Heart right ventricle (tissue), 16 donors: ENCODE measurements at regions of chr10 and their contacts with region 1.

Region 1: DNA sequence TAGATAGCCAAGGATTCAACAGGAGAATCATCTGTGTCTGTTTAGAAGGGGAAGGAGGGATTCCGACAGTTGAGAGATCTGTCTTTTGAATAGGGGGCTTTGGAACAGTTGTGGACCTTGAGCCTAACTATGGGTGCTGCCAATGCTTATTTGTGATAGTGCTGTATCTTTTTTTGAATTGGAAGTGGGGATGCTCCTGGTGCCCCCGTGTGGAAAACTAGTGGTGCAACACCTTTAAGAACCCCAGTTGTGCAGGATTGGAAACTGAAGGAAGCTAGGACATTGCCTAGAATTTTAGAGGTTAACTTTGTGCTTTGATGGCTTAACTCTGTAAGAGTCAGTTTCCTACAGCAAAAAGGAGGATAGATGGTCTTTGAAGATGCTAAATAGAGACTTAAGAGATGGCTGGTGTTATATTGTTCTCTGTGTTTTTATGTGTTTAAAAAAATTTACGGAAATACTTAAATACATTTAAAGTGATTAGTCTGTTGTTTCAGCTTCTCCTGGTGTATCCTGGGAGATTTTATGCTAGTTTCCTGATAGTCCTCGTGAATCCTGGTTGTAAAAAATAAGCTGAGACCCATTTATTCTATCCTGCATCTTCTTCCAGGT is 69.3 kb downstream of the AP3M1 start:
- DNase-seq: peak in 1 of 2 donors; percentile 54
- ATAC-seq: peak; percentile 47 to 77 (median 70)
- H3K4me3 ChIP-seq: no peak overlapping the region
- H3K27ac ChIP-seq: peak overlapping the region in 1 of 10 donors; percentile 54
- H3K4me1 ChIP-seq: peaks cover 0 to 67% (median 38%) of the 10 kb centered on the region in 9 donors
- H3K27me3 ChIP-seq: no peaks in the 10 kb centered on the region
- CTCF ChIP-seq: peak; percentile 52 to 87 (median 76)

Region 2: GRCh38 chr10:73879296-73880173 is 201.8 kb before region 1 on chr10:
- intact Hi-C with region 1: loop called in 3 of 10 experiments (anchors 10 kb)
- DNase-seq: peak; percentile 85 to 90
- ATAC-seq: peak; percentile 89 to 96 (median 94)
- H3K4me3 ChIP-seq: no peak overlapping the region
- H3K27ac ChIP-seq: no peak overlapping the region
- H3K4me1 ChIP-seq: peaks cover 0 to 36% (median 20%) of the 10 kb centered on the region in 9 donors
- H3K27me3 ChIP-seq: no peaks in the 10 kb centered on the region
- CTCF ChIP-seq: peak; percentile 83 to 96 (median 93)

Region 3: GRCh38 chr10:73886085-73886529 is 195.2 kb before region 1 on chr10:
- intact Hi-C with region 1: loop called (anchors 1 to 10 kb)
- DNase-seq: peak; percentile 48 to 88
- ATAC-seq: peak; percentile 77 to 90 (median 86)
- H3K4me3 ChIP-seq: no peak overlapping the region
- H3K27ac ChIP-seq: peak overlapping the region in 9 of 10 donors; percentile 72 to 92 (median 87)
- H3K4me1 ChIP-seq: peaks cover 26 to 34% (median 31%) of the 10 kb centered on the region in 9 donors
- H3K27me3 ChIP-seq: no peaks in the 10 kb centered on the region
- CTCF ChIP-seq: peak; percentile 57 to 93 (median 86)

Region 4: GRCh38 chr10:73956476-73957359 is 124.6 kb before region 1 on chr10:
- intact Hi-C with region 1: loop called in 3 of 10 experiments (anchors 5 to 10 kb)
- DNase-seq: no peak
- ATAC-seq: peak; percentile 53 to 78 (median 70)
- H3K4me3 ChIP-seq: no peak overlapping the region
- H3K27ac ChIP-seq: peak overlapping the region in 9 of 10 donors; percentile 21 to 74 (median 61)
- H3K4me1 ChIP-seq: peaks cover 5 to 60% (median 11%) of the 10 kb centered on the region in 9 donors
- H3K27me3 ChIP-seq: no peaks in the 10 kb centered on the region
- CTCF ChIP-seq: no peak

Region 5: DNA sequence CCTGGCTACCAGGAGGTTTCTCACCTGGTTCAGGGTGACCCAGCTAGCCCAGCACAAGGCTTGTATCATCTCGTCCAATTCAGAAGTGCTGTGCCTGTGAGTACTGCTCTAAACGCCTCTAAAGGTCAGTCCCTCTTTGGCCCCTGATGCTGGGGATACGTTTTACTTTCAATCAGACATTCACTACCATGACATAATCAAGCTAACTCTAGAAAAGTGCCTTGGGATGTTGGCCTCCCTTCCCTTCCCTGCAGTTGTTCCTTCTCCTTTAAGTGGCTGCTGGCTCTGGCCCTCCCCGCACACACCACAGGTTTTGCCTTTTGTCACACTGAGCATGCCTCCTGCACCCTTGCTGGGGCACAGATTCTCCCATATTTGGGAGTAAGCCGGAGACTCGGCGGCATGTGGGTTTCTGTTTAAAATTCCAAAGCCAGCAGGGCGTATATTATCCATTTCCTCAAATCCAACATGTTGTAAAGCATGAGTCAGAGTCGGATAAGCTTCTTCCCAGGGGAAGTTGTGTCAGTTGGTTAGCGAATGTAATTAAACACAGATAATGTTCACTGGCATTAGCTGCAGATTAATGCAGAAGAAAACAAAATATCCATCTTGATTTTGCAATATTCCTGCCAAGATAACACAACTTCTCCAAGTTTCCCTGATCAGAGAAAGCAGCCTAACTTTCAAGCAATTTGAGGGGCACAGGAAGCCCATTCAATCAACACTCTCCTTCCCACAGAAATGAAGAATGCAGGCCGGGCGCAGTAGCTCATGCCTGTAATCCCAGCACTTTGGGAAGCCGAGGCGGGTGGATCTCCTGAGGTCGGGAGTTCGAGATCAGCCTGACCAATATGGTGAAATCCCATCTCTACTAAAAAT is 115.2 kb before region 1 on chr10:
- intact Hi-C with region 1: loop called in 2 of 10 experiments (anchors 5 to 10 kb)
- DNase-seq: peak; percentile 73 to 86
- ATAC-seq: peak; percentile 92 to 96 (median 94)
- H3K4me3 ChIP-seq: peak overlapping the region in 7 of 10 donors; percentile 2 to 30 (median 12)
- H3K27ac ChIP-seq: peak overlapping the region; percentile 26 to 91 (median 90)
- H3K4me1 ChIP-seq: peaks cover 3 to 37% (median 31%) of the 10 kb centered on the region in 9 donors
- H3K27me3 ChIP-seq: no peaks in the 10 kb centered on the region
- CTCF ChIP-seq: no peak

Region 6: DNA sequence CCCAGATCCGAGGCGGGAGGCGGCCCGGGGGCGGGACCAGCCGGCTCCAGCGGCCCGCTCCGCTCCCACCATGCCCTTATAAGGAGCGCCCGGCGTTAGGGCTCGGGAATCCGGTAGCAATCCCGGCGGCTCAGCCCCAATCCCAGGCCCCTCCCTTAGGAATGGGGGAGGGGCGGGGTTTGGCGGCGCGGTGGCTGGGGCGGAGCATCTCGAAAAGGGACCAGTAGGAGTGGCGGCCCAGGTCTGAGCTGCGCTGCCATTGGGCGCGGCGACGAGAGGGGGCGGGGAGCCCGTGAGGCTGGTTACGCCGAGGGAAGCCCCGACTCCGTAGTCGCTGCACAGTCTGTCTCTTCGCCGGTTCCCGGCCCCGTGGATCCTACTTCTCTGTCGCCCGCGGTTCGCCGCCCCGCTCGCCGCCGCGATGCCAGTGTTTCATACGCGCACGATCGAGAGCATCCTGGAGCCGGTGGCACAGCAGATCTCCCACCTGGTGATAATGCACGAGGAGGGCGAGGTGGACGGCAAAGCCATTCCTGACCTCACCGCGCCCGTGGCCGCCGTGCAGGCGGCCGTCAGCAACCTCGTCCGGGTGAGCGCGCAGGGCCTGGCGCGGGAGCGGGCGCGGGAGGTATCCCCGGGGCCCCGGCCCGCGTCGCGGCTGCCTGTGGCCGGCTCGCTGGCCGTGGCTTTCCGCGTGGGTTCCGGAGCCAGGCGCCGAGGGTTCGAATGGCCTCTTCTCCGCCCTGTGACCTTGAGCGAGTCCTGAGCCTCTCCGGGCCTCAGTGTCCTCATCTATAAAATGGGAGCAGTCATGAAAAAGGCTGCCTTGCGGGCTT is 83.3 kb before region 1 on chr10 and contains the start of gene VCL:
- intact Hi-C with region 1: loop called in 5 of 10 experiments (anchors 2 to 10 kb)
- DNase-seq: peak; percentile 98
- ATAC-seq: peak; percentile 96 to 97 (median 97)
- H3K4me3 ChIP-seq: peak within 1 kb of the TSS; percentile 82 to 99 (median 90)
- H3K27ac ChIP-seq: peak within 1 kb of the TSS; percentile 68 to 97 (median 93)
- H3K4me1 ChIP-seq: peaks cover 6 to 47% (median 34%) of the 10 kb centered on the region in 9 donors
- H3K27me3 ChIP-seq: no peaks in the 10 kb centered on the region
- CTCF ChIP-seq: peak in 1 of 9 donors; percentile 14
- total RNA-seq, gene VCL: 210 to 369 (median 251) TPM

Region 7: DNA sequence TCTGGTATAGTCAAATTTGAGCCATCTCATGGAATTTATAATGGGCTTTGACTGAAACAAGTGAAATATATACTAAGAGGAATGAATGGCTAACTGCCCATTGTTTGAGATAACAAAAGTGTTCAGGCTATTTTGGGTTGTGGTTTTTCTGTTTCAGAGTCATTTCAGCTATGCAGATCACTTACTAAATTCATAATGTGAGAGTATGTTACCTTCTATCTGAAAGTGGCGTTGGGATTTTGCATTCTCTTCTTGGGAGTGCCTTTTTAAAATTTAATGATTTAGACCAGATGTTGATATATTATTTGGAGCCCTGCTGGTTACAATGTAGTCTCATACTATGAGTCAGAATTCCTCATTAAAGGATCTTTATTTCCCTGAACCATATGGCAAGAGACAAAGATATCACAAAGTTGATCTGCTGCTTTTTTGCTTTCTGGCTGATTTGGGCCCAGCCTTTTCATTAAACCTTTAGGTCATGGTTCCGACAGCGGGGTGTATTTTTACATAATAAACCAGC is 73.0 kb before region 1 on chr10:
- intact Hi-C with region 1: loop called in 2 of 10 experiments (anchors 10 kb)
- DNase-seq: no peak
- ATAC-seq: no peak
- H3K4me3 ChIP-seq: peak overlapping the region in 1 of 10 donors; percentile 5
- H3K27ac ChIP-seq: peak overlapping the region in 7 of 10 donors; percentile 14 to 80 (median 70)
- H3K4me1 ChIP-seq: peaks cover 11 to 93% (median 82%) of the 10 kb centered on the region in 9 donors
- H3K27me3 ChIP-seq: no peaks in the 10 kb centered on the region
- CTCF ChIP-seq: no peak

Region 8: DNA sequence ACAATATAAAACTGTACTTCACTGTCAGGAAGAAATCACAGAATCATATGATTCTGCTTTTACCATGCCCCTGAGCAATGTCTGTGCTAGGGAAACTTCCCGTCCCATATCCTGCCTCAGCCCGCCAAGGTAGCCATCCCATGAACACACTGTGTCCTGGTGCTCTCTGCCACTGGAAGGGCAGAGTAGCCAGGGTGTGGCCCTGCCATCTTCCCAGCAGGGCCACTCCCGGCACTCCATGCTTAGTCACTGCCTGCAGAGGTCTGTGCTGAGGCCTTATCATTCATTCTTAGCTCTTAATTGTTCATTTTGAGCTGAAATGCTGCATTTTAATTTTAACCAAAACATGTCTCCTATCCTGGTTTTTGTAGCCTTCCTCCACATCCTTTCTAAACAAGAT is 37.5 kb after region 1 on chr10:
- intact Hi-C with region 1: no loop called
- DNase-seq: no peak
- ATAC-seq: peak in 3 of 8 donors; percentile 18 to 50 (median 25)
- H3K4me3 ChIP-seq: no peak overlapping the region
- H3K27ac ChIP-seq: peak overlapping the region in 4 of 10 donors; percentile 21 to 54 (median 38)
- H3K4me1 ChIP-seq: peaks cover 0 to 30% (median 14%) of the 10 kb centered on the region in 9 donors
- H3K27me3 ChIP-seq: no peaks in the 10 kb centered on the region
- CTCF ChIP-seq: no peak